SK-N-SH (cell line): ENCODE measurements at regions of chr9 and their contacts with region 1.

Region 1: DNA sequence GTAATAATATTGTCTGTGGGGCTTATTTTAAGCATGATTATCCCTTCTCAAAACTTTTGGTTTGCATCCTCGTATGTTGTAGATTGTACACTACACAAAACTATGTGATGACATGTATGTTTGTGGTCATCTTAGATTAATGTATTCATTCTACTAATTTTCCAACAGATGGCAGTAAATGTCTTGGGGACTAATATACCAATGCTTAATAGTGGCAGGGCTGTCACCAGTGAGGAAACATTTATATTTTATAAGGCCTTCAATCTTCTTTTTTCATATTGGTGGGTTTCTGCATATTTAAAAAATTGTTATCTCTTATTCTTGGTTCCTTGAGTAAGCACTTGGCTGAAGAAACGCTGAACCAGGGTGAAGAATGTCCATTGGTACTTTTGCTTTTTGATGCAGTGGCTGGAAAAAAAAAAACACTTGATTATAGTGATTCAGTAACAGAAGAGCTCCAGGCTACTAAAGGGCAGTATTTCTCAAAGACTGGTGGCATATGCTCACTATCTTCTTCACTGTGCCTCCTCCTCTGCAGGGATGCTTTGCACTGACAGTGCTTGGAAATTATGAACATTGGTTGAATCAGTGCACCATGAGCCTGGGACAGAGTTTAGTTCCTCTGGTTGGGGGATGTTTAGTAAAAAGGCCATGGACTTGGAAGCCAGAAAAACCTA is 530.3 kb downstream of the RASEF start:
- DNase-seq: peak; percentile 28
- H3K4me3 ChIP-seq: no peak overlapping the region
- H3K27ac ChIP-seq: peak overlapping the region in 1 of 2 experiments; percentile 78; a peak in 1 of 4 replicates
- H3K4me1 ChIP-seq: peaks cover 0 to 3% of the 10 kb centered on the region in 2 experiments; a peak in 2 of 4 replicates
- H3K27me3 ChIP-seq: no peaks in the 10 kb centered on the region
- CTCF ChIP-seq: peak; percentile 49
- EP300 ChIP-seq: no peak
- RAD21 ChIP-seq: peak; percentile 81

Region 2: GRCh38 chr9:82488313-82489200 is 44.1 kb before region 1 on chr9:
- CTCF ChIA-PET with region 1: no interaction called
- POLR2A ChIA-PET with region 1: no interaction called
- DNase-seq: peak; percentile 30
- H3K4me3 ChIP-seq: no peak overlapping the region; a peak in 1 of 4 replicates
- H3K27ac ChIP-seq: peak overlapping the region; percentile 55 to 85
- H3K4me1 ChIP-seq: peaks cover 18 to 19% of the 10 kb centered on the region in 2 experiments
- H3K27me3 ChIP-seq: no peaks in the 10 kb centered on the region
- CTCF ChIP-seq: no peak
- EP300 ChIP-seq: peak; percentile 42 to 48; a peak in 3 of 4 replicates
- RAD21 ChIP-seq: no peak; the same call in 1 of the 2 replicates

Region 3: GRCh38 chr9:82601293-82601771 is 68.7 kb after region 1 on chr9:
- CTCF ChIA-PET with region 1: interaction called, 34 read pairs
- POLR2A ChIA-PET with region 1: interaction called, 4 read pairs
- DNase-seq: peak; percentile 47
- H3K4me3 ChIP-seq: no peak overlapping the region
- H3K27ac ChIP-seq: peak overlapping the region; percentile 48 to 97; a peak in 3 of 4 replicates
- H3K4me1 ChIP-seq: peaks cover 0 to 47% of the 10 kb centered on the region in 2 experiments; a peak in 3 of 4 replicates
- H3K27me3 ChIP-seq: no peaks in the 10 kb centered on the region
- CTCF ChIP-seq: no peak
- EP300 ChIP-seq: peak; percentile 31 to 97; a peak in 3 of 4 replicates
- RAD21 ChIP-seq: peak; percentile 48

Region 4: GRCh38 chr9:82961504-82962125 is 429.0 kb after region 1 on chr9:
- CTCF ChIA-PET with region 1: interaction called, 15 read pairs
- POLR2A ChIA-PET with region 1: no interaction called
- DNase-seq: peak; percentile 74
- H3K4me3 ChIP-seq: no peak overlapping the region; a peak in 1 of 4 replicates
- H3K27ac ChIP-seq: no peak overlapping the region; a peak in 1 of 4 replicates
- H3K4me1 ChIP-seq: peaks cover 0 to 8% of the 10 kb centered on the region in 2 experiments; a peak in 2 of 4 replicates
- H3K27me3 ChIP-seq: no peaks in the 10 kb centered on the region; the same call in 1 of the 2 replicates
- CTCF ChIP-seq: peak; percentile 87
- EP300 ChIP-seq: no peak
- RAD21 ChIP-seq: peak; percentile 97